ENCODE measurements at regions of chrX and their contacts with region 1.

Region 1: GRCh38 chrX:107902721-107903120 is 77.1 kb downstream of the MID2 start:
- DNase-seq: no peak

Region 2: DNA sequence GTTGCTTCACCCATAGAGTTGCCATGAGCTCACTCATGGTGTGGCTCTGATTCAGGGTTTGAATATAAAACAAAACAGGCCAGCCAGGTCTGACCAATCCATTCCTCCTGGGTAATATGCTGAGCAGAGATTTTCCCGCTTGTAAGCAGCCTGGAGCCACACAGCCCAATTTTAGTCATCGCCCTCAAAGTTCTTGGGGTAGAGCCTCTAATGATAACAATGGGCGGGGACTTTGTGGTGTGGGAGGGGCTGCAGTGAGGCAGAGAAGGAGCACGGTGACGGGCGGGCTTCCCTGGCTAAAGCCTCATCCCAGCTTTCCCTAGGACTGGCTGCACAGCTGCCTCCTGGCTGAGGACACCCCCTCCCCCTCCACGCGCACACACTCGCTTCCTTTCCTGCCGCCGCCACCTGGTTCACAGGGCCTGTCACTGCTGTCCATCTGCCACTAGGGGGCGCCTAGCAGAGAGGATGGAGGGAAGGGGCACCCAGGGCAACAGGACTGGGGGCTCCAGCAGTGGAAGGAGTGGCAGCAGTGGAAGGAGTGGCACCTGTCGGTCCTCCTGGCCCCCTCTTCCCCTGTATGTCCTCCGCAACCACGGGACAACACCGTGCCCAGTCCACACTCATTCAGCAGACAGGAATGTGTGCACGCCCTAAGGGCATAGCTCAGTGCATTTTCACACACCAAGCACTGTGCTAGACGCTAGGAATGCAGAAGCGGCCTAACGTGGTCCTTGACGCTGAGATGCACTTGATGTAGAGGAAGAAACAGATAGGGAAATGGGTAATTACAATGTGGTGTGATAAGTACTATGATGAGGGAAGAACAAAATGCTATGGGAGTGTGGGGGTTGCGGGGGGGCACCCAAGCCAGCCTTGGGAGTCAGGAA is 247.6 kb before region 1 on chrX:
- intact Hi-C with region 1: loop called in 1 of 2 experiments (anchors 10 kb)
- DNase-seq: peak; percentile 85

Measured in posterior vena cava (tissue), 2 donors.